Right cardiac atrium (tissue), 5 donors: ENCODE measurements at regions of chr4 and their contacts with region 1.

Region 1: GRCh38 chr4:21113496-21114223 is 413.4 kb downstream of the PACRGL start:
- DNase-seq: no peak
- ATAC-seq: no peak
- H3K4me3 ChIP-seq: no peak overlapping the region
- H3K27ac ChIP-seq: no peak overlapping the region
- H3K4me1 ChIP-seq: no peaks in the 10 kb centered on the region
- H3K27me3 ChIP-seq: no peaks in the 10 kb centered on the region

Region 2: GRCh38 chr4:20237894-20238537 is 875.6 kb before region 1 on chr4:
- intact Hi-C with region 1: loop called in 1 of 4 experiments (anchors 10 kb)
- DNase-seq: no peak
- ATAC-seq: no peak
- H3K4me3 ChIP-seq: no peak overlapping the region
- H3K27ac ChIP-seq: no peak overlapping the region
- H3K4me1 ChIP-seq: no peaks in the 10 kb centered on the region
- H3K27me3 ChIP-seq: no peaks in the 10 kb centered on the region

Region 3: GRCh38 chr4:20883231-20883630 is 230.4 kb before region 1 on chr4:
- intact Hi-C with region 1: no loop called
- DNase-seq: no peak
- ATAC-seq: no peak
- H3K4me3 ChIP-seq: no peak overlapping the region
- H3K27ac ChIP-seq: no peak overlapping the region
- H3K4me1 ChIP-seq: no peaks in the 10 kb centered on the region
- H3K27me3 ChIP-seq: no peaks in the 10 kb centered on the region

Region 4: DNA sequence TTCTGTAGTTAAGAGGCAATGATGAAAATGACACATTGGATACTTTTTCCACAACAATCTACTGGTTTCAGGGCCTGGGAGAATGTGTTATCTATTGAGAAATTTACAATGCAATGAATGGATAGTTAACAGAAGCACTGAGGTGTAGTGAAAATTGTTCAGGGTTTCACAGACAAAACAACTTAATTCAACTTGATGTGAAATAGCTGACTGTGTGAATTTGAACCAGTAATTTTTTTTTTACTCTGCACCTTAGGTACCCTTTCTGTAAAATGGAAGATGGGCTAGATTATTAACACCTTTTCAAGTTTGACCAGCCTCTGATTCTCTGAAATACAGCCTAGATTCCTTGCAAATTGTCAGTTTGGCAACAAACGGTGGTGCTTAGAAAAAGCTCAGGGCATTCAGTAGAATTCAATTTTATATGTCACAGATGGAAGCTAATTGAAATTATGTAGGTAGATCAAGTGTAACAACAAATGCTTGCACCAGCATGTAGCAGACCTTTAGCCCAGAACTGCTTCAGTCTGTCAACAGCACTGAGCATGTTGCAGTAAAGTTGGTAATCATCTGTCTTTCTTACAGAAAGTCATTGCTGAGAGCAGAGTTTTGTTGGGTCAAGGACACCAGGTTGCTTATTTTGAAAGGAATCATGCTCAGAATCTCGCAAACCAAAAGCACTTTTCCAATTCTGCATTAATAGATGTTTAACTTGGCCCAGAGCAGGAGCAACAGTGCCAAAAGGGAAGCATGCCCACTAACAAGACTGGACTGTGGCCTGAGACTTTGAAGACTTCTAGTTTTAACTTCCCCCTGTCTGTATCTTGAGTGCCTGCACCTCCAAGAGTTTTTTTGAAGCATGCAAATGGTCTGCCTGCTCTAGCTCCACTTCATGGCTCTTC is 113.2 kb after region 1 on chr4:
- intact Hi-C with region 1: no loop called
- DNase-seq: no peak
- ATAC-seq: no peak
- H3K4me3 ChIP-seq: no peak overlapping the region
- H3K27ac ChIP-seq: no peak overlapping the region
- H3K4me1 ChIP-seq: no peaks in the 10 kb centered on the region
- H3K27me3 ChIP-seq: no peaks in the 10 kb centered on the region